ENCODE measurements at regions of chr22 and their contacts with region 1.

Region 1: GRCh38 chr22:19903031-19903430 is 38.5 kb upstream of the COMT start:
- DNase-seq: peak; percentile 82
- H3K4me3 ChIP-seq: no peak overlapping the region
- H3K27ac ChIP-seq: peak overlapping the region in 1 of 2 experiments; percentile 85; a peak in 2 of 4 replicates
- H3K4me1 ChIP-seq: peaks cover 0 to 49% of the 10 kb centered on the region in 2 experiments; a peak in 3 of 4 replicates
- H3K27me3 ChIP-seq: no peaks in the 10 kb centered on the region
- CTCF ChIP-seq: no peak
- EP300 ChIP-seq: no peak
- RAD21 ChIP-seq: peak; percentile 13; the same call in 1 of the 2 replicates

Region 2: GRCh38 chr22:19514831-19515565 is 388.0 kb before region 1 on chr22:
- CTCF ChIA-PET with region 1: no interaction called
- POLR2A ChIA-PET with region 1: no interaction called
- DNase-seq: no peak
- H3K4me3 ChIP-seq: no peak overlapping the region
- H3K27ac ChIP-seq: no peak overlapping the region
- H3K4me1 ChIP-seq: no peaks in the 10 kb centered on the region
- H3K27me3 ChIP-seq: no peaks in the 10 kb centered on the region
- CTCF ChIP-seq: no peak
- EP300 ChIP-seq: no peak
- RAD21 ChIP-seq: no peak

Region 3: GRCh38 chr22:19872779-19873137 is 30.3 kb before region 1 on chr22:
- CTCF ChIA-PET with region 1: no interaction called
- POLR2A ChIA-PET with region 1: no interaction called
- DNase-seq: no peak
- H3K4me3 ChIP-seq: no peak overlapping the region
- H3K27ac ChIP-seq: no peak overlapping the region
- H3K4me1 ChIP-seq: peaks cover 5 to 21% of the 10 kb centered on the region in 2 experiments; a peak in 2 of 4 replicates
- H3K27me3 ChIP-seq: no peaks in the 10 kb centered on the region
- CTCF ChIP-seq: no peak
- EP300 ChIP-seq: no peak
- RAD21 ChIP-seq: no peak

Region 4: GRCh38 chr22:19891317-19892256 is 11.4 kb before region 1 on chr22:
- CTCF ChIA-PET with region 1: interaction called, 12 read pairs
- POLR2A ChIA-PET with region 1: interaction called, 5 read pairs
- DNase-seq: peak; percentile 89
- H3K4me3 ChIP-seq: no peak overlapping the region
- H3K27ac ChIP-seq: peak overlapping the region; percentile 72 to 98
- H3K4me1 ChIP-seq: peaks cover 42 to 43% of the 10 kb centered on the region in 2 experiments
- H3K27me3 ChIP-seq: no peaks in the 10 kb centered on the region
- CTCF ChIP-seq: no peak
- EP300 ChIP-seq: peak; percentile 74 to 90; a peak in 3 of 4 replicates
- RAD21 ChIP-seq: no peak

Measured in SK-N-SH (cell line).